Left ventricle myocardium superior (tissue), 1 donor: ENCODE measurements at regions of chr6 and their contacts with region 1.

Region 1: GRCh38 chr6:132483779-132484679 is 28.9 kb downstream of the STX7 start:
- DNase-seq: no peak
- ATAC-seq: peak; percentile 78

Region 2: GRCh38 chr6:132279592-132280139 is 204.4 kb before region 1 on chr6:
- intact Hi-C with region 1: loop called (anchors 2 kb)
- DNase-seq: peak; percentile 72
- ATAC-seq: peak; percentile 79

Region 3: DNA sequence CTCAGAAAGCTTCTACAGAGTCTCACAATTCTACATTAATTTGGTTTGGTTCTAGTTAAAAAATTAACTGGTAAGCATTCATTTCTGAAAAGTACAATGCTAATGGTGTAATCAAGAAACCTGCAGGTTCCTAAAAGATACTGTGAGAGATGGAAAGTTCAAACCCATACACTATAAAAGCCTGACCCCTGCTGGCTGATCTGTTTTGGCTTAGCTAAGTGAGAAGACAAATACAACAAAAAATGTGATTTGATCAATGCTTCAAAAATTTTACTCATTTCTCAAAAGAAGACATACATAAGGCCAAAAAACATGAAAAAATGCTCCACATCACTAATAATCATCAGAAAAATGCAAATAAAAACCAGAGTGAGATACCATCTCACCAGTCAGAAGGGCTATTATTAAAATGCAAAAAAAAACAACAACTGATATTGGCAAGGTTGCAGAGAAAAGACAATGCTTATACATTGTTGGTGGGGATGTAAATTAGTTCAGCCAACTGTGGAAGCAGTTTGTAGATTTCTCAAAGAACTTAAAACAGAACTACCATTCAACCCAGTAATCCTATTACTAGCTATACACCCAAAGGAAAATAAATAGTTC is 185.6 kb before region 1 on chr6:
- intact Hi-C with region 1: loop called (anchors 5 kb)
- DNase-seq: no peak
- ATAC-seq: no peak

Region 4: GRCh38 chr6:132354512-132355167 is 129.4 kb before region 1 on chr6:
- intact Hi-C with region 1: no loop called
- DNase-seq: no peak
- ATAC-seq: no peak